OCI-LY7 (cell line): ENCODE measurements at regions of chr9 and their contacts with region 1.

Region 1: GRCh38 chr9:90566411-90566810 is 76.2 kb downstream of the DIRAS2 start:
- DNase-seq: no peak
- H3K4me3 ChIP-seq: no peak overlapping the region
- H3K27ac ChIP-seq: no peak overlapping the region
- H3K4me1 ChIP-seq: no peaks in the 10 kb centered on the region
- CTCF ChIP-seq: no peak

Region 2: GRCh38 chr9:90009447-90009846 is 557.0 kb before region 1 on chr9:
- CTCF ChIA-PET with region 1: no interaction called
- POLR2A ChIA-PET with region 1: interaction called, 10 read pairs
- intact Hi-C with region 1: no loop called
- DNase-seq: peak; percentile 88
- H3K4me3 ChIP-seq: peak overlapping the region; percentile 23
- H3K27ac ChIP-seq: peak overlapping the region; percentile 36
- H3K4me1 ChIP-seq: peaks cover 43% of the 10 kb centered on the region
- CTCF ChIP-seq: no peak